ENCODE measurements at regions of chr11 and their contacts with region 1.

Region 1: GRCh38 chr11:32297611-32298011 is 137.7 kb downstream of the WT1 start:
- DNase-seq: peak; percentile 72
- ATAC-seq: peak; percentile 58
- H3K4me3 ChIP-seq: no peak overlapping the region
- H3K27ac ChIP-seq: no peak overlapping the region
- H3K4me1 ChIP-seq: no peaks in the 10 kb centered on the region
- H3K27me3 ChIP-seq: no peaks in the 10 kb centered on the region
- CTCF ChIP-seq: peak; percentile 59

Region 2: GRCh38 chr11:32052218-32052617 is 245.4 kb before region 1 on chr11:
- CTCF ChIA-PET with region 1: no interaction called
- POLR2A ChIA-PET with region 1: no interaction called
- intact Hi-C with region 1: loop called (anchors 5 kb)
- DNase-seq: peak; percentile 74
- ATAC-seq: peak; percentile 50
- H3K4me3 ChIP-seq: no peak overlapping the region
- H3K27ac ChIP-seq: no peak overlapping the region
- H3K4me1 ChIP-seq: no peaks in the 10 kb centered on the region
- H3K27me3 ChIP-seq: peaks cover 64% of the 10 kb centered on the region
- CTCF ChIP-seq: peak; percentile 81